ENCODE measurements at regions of chr1 and their contacts with region 1.

Region 1: DNA sequence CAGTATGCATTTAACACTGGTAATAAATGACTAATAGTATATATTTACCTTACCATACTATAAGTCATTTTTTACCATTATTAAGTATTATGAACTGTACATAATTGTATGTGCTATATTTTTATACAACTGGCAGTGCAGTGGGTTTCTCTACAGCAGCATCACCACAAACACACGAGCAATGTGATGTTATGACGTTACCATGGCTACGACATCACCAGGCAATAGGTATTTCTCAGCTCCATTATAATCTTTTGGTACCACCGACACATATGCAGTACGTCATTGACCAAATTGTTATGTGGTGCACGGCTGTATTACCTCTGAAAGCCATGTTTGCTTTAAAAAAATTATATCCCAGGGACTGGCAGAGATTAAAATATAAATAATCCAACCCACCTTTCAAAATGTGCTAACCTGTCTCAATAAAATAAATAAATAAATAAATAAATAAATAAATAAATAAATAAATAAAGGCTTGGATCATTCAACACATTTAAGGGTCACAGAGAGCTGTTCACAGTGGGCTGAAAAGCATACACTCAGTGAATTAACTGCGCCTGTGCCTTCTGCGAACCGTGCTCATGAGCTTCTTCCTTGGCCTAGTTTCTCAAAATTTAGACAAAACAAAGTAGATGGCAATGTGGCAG is 121.4 kb upstream of the SLC35F3 start:
- DNase-seq: no peak
- H3K4me3 ChIP-seq: no peak overlapping the region
- H3K27ac ChIP-seq: no peak overlapping the region
- H3K4me1 ChIP-seq: no peaks in the 10 kb centered on the region
- H3K27me3 ChIP-seq: no peaks in the 10 kb centered on the region
- CTCF ChIP-seq: no peak

Region 2: DNA sequence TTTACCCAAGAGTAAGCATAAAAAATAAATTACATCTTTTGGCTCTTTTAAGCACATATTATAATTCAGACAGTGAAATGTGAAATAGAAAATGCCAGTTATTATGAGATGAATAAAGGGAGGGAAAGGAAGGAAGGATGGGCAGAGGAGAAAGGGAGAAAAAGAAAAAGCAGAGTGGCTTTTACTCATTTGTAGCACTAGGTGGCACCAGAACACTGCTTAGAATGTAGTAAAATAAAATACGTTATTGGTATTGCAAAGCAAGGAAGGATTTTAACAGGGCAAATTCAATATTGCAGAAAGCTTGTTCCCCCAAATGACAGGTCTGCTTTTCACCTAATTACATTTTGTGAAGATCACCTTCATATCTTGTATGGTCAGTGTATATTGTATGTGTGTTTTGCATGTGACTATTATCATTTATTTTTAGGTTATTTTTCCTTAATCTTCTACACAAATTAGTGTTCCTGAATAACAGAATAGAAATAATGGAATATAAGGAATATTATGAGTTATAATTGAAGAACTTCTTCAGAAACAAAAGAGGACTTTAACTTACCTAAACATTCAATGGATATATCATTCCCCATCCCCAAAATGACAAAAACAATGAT is 478.5 kb before region 1 on chr1:
- intact Hi-C with region 1: loop called (anchors 10 kb)
- DNase-seq: no peak
- H3K4me3 ChIP-seq: no peak overlapping the region
- H3K27ac ChIP-seq: no peak overlapping the region
- H3K4me1 ChIP-seq: no peaks in the 10 kb centered on the region
- H3K27me3 ChIP-seq: no peaks in the 10 kb centered on the region
- CTCF ChIP-seq: peak; percentile 85

Region 3: GRCh38 chr1:234000557-234001041 is 217.5 kb after region 1 on chr1:
- intact Hi-C with region 1: no loop called
- DNase-seq: no peak
- H3K4me3 ChIP-seq: no peak overlapping the region
- H3K27ac ChIP-seq: no peak overlapping the region
- H3K4me1 ChIP-seq: no peaks in the 10 kb centered on the region
- H3K27me3 ChIP-seq: no peaks in the 10 kb centered on the region
- CTCF ChIP-seq: no peak